ENCODE measurements at regions of chr12 and their contacts with region 1.

Region 1: GRCh38 chr12:10607885-10608458 is 5.4 kb downstream of the MAGOHB start:
- DNase-seq: peak; percentile 17
- H3K4me3 Mint-ChIP-seq: no peak overlapping the region
- H3K27ac Mint-ChIP-seq: no peak overlapping the region
- H3K4me1 Mint-ChIP-seq: peaks cover 14% of the 10 kb centered on the region
- H3K27me3 Mint-ChIP-seq: no peaks in the 10 kb centered on the region
- CTCF ChIP-seq: peak; percentile 23

Region 2: DNA sequence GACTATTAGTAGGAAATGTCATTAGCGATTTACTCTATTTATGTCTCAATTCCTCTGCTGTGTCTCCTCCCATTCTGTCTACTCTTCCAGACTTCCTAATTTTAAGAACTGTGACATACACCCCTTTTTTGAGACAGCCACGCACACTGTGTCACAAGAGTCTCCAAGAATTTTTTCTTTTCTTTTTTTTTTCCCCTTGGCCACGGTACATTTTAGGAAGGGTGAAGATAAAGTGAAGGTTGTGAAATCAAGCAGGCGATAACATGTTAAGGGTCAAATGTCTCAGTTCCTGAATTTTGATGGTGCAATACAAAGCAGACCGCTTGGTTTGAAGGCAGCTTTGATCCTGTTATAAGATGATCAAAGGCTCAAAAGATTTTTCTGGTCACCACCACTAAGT is 440.4 kb before region 1 on chr12:
- CTCF ChIA-PET with region 1: no interaction called
- POLR2A ChIA-PET with region 1: no interaction called
- intact Hi-C with region 1: no loop called
- DNase-seq: peak; percentile 72
- H3K4me3 Mint-ChIP-seq: no peak overlapping the region
- H3K27ac Mint-ChIP-seq: no peak overlapping the region
- H3K4me1 Mint-ChIP-seq: peaks cover 26% of the 10 kb centered on the region
- H3K27me3 Mint-ChIP-seq: no peaks in the 10 kb centered on the region
- CTCF ChIP-seq: no peak

Region 3: GRCh38 chr12:10623131-10623530 is 15.2 kb after region 1 on chr12:
- CTCF ChIA-PET with region 1: no interaction called
- POLR2A ChIA-PET with region 1: no interaction called
- intact Hi-C with region 1: no loop called
- DNase-seq: no peak
- H3K4me3 Mint-ChIP-seq: no peak overlapping the region
- H3K27ac Mint-ChIP-seq: no peak overlapping the region
- H3K4me1 Mint-ChIP-seq: peaks cover 4% of the 10 kb centered on the region
- H3K27me3 Mint-ChIP-seq: no peaks in the 10 kb centered on the region
- CTCF ChIP-seq: no peak

Region 4: DNA sequence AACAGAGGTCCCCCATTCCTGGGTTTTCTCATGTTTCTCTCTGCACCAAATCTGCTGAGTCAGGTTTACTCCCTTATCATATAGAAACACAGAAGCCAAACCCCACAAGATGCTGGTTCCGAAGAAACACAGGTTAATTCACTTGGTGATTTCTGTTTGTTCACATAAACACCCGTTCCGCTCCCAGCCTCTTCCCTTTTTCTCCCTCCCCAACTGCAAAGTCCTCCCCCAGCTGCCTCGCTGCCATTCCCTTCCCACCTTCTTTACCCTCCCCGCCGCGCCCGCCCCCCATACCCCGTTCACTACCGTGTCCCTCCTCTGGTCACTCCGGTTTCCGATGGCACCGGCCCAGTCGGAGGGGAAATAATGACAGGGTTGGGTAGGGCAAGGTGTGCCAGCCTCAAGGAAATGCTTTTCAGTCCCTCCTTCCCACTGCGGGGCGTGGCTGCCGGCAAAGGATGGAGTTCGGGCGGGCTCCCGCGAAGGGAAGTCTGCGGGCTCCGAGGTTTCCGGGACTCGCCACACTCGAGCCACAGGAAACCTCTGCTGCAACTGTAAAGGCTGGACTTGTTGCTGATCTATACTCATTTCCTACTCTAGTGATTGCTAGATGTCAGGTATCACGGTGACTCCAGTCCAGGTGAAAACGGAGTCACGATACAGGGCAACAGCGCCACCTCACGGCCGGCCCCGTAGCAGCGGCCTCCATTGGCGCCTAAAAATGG is 65.8 kb after region 1 on chr12 and contains the start of gene STYK1:
- CTCF ChIA-PET with region 1: interaction called, 7 read pairs
- POLR2A ChIA-PET with region 1: interaction called, 5 read pairs
- intact Hi-C with region 1: loop called (anchors 2 kb)
- DNase-seq: peak; percentile 72
- H3K4me3 Mint-ChIP-seq: peak within 1 kb of the TSS; percentile 74
- H3K27ac Mint-ChIP-seq: no peak within 1 kb of the TSS
- H3K4me1 Mint-ChIP-seq: no peaks in the 10 kb centered on the region
- H3K27me3 Mint-ChIP-seq: no peaks in the 10 kb centered on the region
- CTCF ChIP-seq: peak; percentile 96
- total RNA-seq, gene STYK1: 0.14 and 0.56 TPM in 2 replicates

Measured in MCF 10A (cell line).